ENCODE measurements at regions of chr14 and their contacts with region 1.

Region 1: GRCh38 chr14:72792051-72792788 is 101.7 kb downstream of the DPF3 start:
- DNase-seq: peak in 1 of 2 donors; percentile 71
- H3K4me3 ChIP-seq: peak overlapping the region; percentile 37 to 47
- H3K27ac ChIP-seq: peak overlapping the region; percentile 64 to 75
- H3K4me1 ChIP-seq: peaks cover 3 to 20% of the 10 kb centered on the region in 2 donors
- H3K27me3 ChIP-seq: no peaks in the 10 kb centered on the region
- CTCF ChIP-seq: no peak

Region 2: DNA sequence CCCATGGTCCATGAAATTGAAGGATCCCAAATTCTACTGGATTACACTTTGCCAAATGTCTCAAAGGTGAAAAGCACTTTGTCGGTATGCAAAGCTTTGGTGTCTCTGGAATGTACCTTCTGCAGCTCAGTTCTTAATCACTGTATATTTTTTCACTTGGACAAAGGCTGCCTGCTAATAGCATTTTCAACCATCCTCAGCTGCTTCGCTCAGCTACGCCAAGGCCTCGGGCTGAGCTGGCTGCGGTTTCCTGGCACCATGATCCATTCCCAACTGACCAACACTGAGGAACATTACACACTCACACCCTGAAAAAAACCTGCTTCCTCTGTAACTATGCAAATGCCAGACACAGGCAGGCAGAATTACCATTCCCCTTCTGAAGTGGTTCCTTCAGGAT is 233.5 kb before region 1 on chr14:
- intact Hi-C with region 1: loop called (anchors 5 kb)
- DNase-seq: no peak
- H3K4me3 ChIP-seq: no peak overlapping the region
- H3K27ac ChIP-seq: peak overlapping the region; percentile 55 to 75
- H3K4me1 ChIP-seq: peaks cover 3 to 23% of the 10 kb centered on the region in 2 donors
- H3K27me3 ChIP-seq: no peaks in the 10 kb centered on the region
- CTCF ChIP-seq: no peak

Region 3: GRCh38 chr14:72745991-72746980 is 45.9 kb before region 1 on chr14:
- intact Hi-C with region 1: loop called (anchors 5 kb)
- DNase-seq: no peak
- H3K4me3 ChIP-seq: no peak overlapping the region
- H3K27ac ChIP-seq: peak overlapping the region; percentile 65 to 72
- H3K4me1 ChIP-seq: peaks cover 0 to 8% of the 10 kb centered on the region in 2 donors
- H3K27me3 ChIP-seq: no peaks in the 10 kb centered on the region
- CTCF ChIP-seq: peak in 2 of 3 experiments; percentile 20 to 23

Region 4: GRCh38 chr14:72926292-72927028 is 134.2 kb after region 1 on chr14 and contains the start of gene DCAF4:
- intact Hi-C with region 1: no loop called
- DNase-seq: peak; percentile 92 to 98
- H3K4me3 ChIP-seq: peak within 1 kb of the TSS; percentile 60 to 91
- H3K27ac ChIP-seq: peak within 1 kb of the TSS; percentile 67 to 77
- H3K4me1 ChIP-seq: peaks cover 5% of the 10 kb centered on the region in 2 donors
- H3K27me3 ChIP-seq: no peaks in the 10 kb centered on the region
- CTCF ChIP-seq: no peak
- total RNA-seq, gene DCAF4: 0.64 TPM